ENCODE measurements at regions of chr1 and their contacts with region 1.

Region 1: GRCh38 chr1:211654838-211655787 is 20.3 kb downstream of the NEK2 start:
- DNase-seq: peak; percentile 84 to 89
- H3K4me3 ChIP-seq: no peak overlapping the region
- H3K4me3 Mint-ChIP-seq: no peak overlapping the region
- H3K27ac Mint-ChIP-seq: no peak overlapping the region
- H3K4me1 ChIP-seq: peaks cover 21% of the 10 kb centered on the region
- H3K4me1 Mint-ChIP-seq: peaks cover 22% of the 10 kb centered on the region
- H3K27me3 ChIP-seq: no peaks in the 10 kb centered on the region
- H3K27me3 Mint-ChIP-seq: no peaks in the 10 kb centered on the region
- CTCF ChIP-seq: peak; percentile 90 to 91

Region 2: DNA sequence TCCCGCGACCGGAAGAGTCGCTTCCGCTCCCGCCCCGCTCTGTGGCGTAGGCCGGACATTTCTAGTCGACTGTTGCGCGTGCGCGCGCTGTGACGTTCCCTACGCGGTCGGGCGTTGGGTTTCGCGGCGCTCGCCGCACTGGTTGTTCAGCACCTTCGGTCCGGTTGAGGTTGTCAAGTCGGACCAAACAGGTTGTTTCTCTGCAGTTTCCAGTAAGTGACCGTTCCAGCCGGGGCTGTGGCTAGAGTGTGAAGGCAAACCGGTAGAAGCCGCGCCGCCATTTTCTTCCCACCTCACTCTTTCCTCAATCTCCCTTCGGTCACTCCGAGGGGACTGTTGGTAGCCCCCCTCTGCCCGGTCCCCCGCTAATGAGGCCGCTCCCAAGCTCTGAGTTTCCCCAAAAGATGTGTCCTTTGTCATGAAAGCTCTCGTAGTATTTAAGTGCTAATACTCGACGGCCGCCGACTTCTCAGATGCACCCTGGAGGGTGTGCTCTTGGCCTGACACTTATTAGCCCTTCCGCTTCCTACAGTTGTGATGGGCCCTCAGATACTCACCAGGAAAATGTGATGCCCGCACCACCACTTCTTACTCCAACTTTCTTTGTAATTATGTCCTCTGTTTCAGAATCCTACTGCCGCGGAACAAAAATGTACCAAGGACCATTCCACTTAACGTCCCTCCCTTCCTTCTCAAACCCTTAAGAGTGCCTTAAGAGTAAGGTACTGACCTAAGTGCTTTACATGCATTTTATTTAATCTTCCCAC is 272.2 kb before region 1 on chr1:
- CTCF ChIA-PET with region 1: no interaction called
- POLR2A ChIA-PET with region 1: no interaction called
- intact Hi-C with region 1: loop called (anchors 1 kb)
- DNase-seq: peak; percentile 93 to 94
- H3K4me3 ChIP-seq: peak overlapping the region; percentile 58
- H3K4me3 Mint-ChIP-seq: peak overlapping the region; percentile 95
- H3K27ac Mint-ChIP-seq: peak overlapping the region; percentile 100
- H3K4me1 ChIP-seq: no peaks in the 10 kb centered on the region
- H3K4me1 Mint-ChIP-seq: peaks cover 14% of the 10 kb centered on the region
- H3K27me3 ChIP-seq: no peaks in the 10 kb centered on the region
- H3K27me3 Mint-ChIP-seq: no peaks in the 10 kb centered on the region
- CTCF ChIP-seq: no peak

Region 3: DNA sequence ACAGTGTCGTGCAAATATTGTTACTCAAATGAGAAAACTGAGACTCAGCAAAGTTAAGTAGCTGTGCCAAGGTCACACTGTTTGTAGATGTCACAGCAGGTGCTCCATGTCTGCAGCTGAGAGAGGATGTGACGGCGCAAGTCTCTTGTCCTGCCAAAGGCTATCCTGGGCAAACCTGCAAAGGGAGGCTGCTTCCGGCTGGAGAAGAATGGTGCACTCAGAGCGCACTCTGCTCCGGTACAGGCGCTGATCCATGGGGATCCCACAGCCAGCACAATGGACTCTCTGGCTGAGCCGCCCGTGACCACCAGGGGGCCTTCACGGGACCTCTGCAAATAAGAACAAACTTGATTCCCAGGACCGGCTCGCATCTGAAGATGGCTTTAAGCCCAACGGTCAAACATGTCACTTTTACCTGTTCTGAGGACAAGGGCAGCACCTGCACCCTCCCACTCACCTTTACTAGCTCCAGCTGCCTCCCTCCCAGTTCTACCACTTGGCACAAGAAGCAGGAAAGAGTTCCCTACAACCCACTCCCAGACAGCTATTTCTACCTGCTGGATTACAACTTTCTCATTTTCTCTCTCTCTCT is 185.1 kb before region 1 on chr1:
- CTCF ChIA-PET with region 1: no interaction called
- POLR2A ChIA-PET with region 1: no interaction called
- intact Hi-C with region 1: loop called (anchors 1 kb)
- DNase-seq: peak; percentile 86 to 87
- H3K4me3 ChIP-seq: no peak overlapping the region
- H3K4me3 Mint-ChIP-seq: no peak overlapping the region
- H3K27ac Mint-ChIP-seq: no peak overlapping the region
- H3K4me1 ChIP-seq: no peaks in the 10 kb centered on the region
- H3K4me1 Mint-ChIP-seq: no peaks in the 10 kb centered on the region
- H3K27me3 ChIP-seq: peaks cover 2% of the 10 kb centered on the region; the same call in 1 of the 2 replicates
- H3K27me3 Mint-ChIP-seq: peaks cover 5% of the 10 kb centered on the region
- CTCF ChIP-seq: peak; percentile 94 to 96

Region 4: GRCh38 chr1:211625040-211625439 is 30.1 kb before region 1 on chr1:
- CTCF ChIA-PET with region 1: interaction called, 3 read pairs
- POLR2A ChIA-PET with region 1: no interaction called
- intact Hi-C with region 1: loop called (anchors 1 kb)
- DNase-seq: peak; percentile 63 to 67
- H3K4me3 ChIP-seq: no peak overlapping the region
- H3K4me3 Mint-ChIP-seq: no peak overlapping the region
- H3K27ac Mint-ChIP-seq: no peak overlapping the region
- H3K4me1 ChIP-seq: no peaks in the 10 kb centered on the region
- H3K4me1 Mint-ChIP-seq: peaks cover 9% of the 10 kb centered on the region
- H3K27me3 ChIP-seq: no peaks in the 10 kb centered on the region
- H3K27me3 Mint-ChIP-seq: no peaks in the 10 kb centered on the region
- CTCF ChIP-seq: peak; percentile 40

Measured in Caco-2 (cell line).